ENCODE measurements at regions of chr20 and their contacts with region 1.

Region 1: DNA sequence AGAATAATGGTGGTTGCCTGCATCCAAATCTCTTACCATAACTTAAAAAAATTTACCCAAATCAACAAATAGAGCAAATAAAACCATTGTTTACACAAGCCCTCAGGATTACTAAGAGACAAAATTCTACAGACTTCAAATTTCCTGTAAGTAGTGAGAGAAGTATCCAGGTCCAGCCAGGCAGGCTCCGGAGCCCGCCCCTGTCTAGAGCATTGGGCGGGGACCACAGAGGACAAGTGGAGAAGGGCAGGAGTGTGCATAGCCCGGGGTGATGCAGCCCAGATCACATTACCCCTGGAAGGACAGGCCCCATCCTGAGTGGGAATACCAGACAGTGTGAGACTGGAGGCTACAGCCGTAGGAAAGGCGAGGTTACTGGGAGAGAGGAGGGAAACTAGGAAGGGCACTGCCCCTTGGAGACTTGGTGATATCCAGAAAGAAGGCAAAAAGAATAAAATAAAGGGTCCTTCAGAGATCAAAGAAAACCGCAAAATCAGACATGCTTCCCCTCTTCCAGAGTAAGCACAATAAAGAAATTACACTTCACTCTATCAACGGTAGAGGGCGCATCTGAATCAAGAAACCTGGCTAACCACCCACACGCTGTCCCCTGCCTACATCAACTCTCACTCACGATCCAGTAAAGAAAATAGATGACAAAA is 26.6 kb downstream of the RIN2 start:
- DNase-seq: peak in 4 of 5 donors; percentile 24 to 47 (median 38)
- H3K4me3 ChIP-seq: no peak overlapping the region
- H3K27ac ChIP-seq: no peak overlapping the region
- H3K4me1 ChIP-seq: peaks cover 9% of the 10 kb centered on the region
- H3K27me3 ChIP-seq: no peaks in the 10 kb centered on the region
- CTCF ChIP-seq: peak; percentile 43 to 76 (median 63)
- EP300 ChIP-seq: no peak
- POLR2A ChIP-seq: no peak

Region 2: DNA sequence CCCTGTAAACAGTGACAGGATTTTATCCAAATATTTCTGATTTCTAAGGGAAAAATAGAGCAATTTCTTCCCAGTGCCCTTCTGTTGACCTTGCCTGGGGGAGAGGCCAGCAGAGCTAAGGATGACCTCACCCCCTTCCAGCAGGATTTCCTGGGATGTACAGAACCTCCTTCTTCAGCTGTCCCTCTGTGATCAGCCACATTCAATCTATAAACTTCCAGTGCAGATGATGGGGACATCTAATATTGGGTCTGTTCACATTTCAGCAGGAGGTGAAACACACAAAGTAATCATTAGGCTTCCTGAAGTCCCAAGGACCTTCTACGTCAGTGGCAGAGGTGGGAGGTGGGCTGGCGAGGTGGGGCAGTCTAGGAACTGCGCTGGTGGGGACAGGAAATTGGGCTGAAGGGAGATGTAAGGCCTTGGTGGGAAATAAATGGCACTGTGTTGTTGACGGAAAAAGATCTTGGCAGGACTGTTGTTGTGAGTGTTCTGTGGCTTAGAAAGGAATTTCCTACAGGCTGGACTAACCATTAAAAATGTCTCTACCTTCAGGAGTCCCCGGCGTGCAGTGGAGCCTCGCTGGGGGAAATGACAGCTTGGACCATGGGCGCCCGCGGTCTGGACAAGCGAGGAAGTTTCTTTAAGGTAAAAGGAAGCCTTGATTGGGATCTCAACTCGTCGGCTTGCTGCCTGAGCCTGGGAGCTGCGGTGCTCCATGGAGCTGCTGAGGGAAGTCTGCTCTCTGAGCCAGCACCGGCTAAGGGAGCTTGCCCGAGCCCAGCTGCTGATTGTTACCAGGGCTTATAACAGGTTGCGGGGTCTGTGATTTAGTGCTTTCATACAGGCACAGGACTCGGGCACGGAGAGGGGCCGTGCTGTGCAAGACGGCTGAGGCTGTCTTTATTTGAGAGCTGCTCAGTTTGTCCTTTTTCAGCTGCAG is 104.6 kb after region 1 on chr20:
- intact Hi-C with region 1: loop called in 1 of 4 experiments (anchors 10 kb)
- DNase-seq: peak; percentile 54 to 73 (median 69)
- H3K4me3 ChIP-seq: peak overlapping the region; percentile 17
- H3K27ac ChIP-seq: peak overlapping the region; percentile 74 to 90
- H3K4me1 ChIP-seq: peaks cover 26% of the 10 kb centered on the region
- H3K27me3 ChIP-seq: no peaks in the 10 kb centered on the region
- CTCF ChIP-seq: no peak
- EP300 ChIP-seq: no peak
- POLR2A ChIP-seq: no peak

Region 3: GRCh38 chr20:20603339-20603990 is 818.8 kb after region 1 on chr20:
- intact Hi-C with region 1: no loop called
- DNase-seq: no peak
- H3K4me3 ChIP-seq: no peak overlapping the region
- H3K27ac ChIP-seq: no peak overlapping the region
- H3K4me1 ChIP-seq: no peaks in the 10 kb centered on the region
- H3K27me3 ChIP-seq: no peaks in the 10 kb centered on the region
- CTCF ChIP-seq: no peak
- EP300 ChIP-seq: no peak
- POLR2A ChIP-seq: no peak

Measured in ovary (tissue), 10 donors.